HepG2 (cell line): ENCODE measurements at regions of chr6 and their contacts with region 1.

Region 1: DNA sequence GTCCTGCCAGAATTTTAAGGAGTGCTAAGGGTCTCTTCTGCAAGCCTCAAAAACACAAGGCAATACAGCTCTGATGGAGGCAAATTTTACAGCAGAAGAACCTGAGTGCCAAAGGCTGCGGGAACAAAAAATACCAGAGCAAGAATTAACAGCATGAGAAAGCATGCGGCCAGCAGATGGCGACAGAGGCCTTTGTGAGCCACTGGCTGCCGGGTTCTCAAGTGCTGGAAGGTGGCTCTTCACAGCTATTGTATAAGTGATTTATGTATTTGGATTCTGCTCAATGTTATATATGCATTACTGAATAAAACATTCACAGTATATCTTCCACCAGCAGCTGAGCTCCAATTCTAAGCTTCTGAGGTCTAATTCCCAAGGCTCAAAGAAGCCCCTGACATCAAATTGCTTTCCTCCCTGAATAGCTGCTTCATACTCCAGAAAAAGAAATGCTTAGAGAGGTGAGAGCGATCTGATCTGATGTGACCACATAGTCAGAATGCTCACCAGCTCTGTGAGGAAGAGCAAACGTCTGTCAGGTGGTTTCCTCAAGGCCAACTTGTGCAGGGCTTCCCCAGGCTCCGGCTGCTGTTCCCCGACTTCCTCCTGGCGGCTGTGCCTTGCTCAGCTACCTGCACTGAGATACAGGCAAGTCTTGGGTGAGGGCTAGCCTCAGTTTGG is 58.6 kb downstream of the PPP1R3G start:
- DNase-seq: peak; percentile 75
- ATAC-seq: peak; percentile 80
- H3K4me3 ChIP-seq: no peak overlapping the region
- H3K27ac ChIP-seq: no peak overlapping the region
- H3K4me1 ChIP-seq: peaks cover 26% of the 10 kb centered on the region
- H3K27me3 ChIP-seq: no peaks in the 10 kb centered on the region
- CTCF ChIP-seq: peak; percentile 93
- EP300 ChIP-seq: no peak
- POLR2A ChIP-seq: no peak
- RAD21 ChIP-seq: peak; percentile 92

Region 2: DNA sequence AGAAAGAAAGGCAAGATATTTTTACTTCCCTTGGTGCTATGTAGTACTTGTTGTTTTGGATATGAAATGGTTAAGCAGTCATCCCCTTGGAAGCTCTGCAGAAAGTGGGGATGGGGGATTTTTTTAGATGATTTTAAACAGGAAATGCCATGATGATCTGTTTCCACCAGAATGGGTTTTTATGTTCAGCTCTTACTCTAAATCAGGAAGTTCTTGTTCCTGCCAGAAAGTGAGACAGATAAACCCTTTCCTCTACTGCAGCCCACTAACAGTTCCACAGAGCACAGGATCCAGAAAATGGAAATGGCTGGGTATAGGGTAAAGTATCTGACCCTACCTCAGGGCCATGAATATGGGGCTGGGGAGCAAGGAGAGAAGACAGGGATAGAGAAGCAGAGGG is 90.7 kb before region 1 on chr6:
- CTCF ChIA-PET with region 1: interaction called, 3 read pairs
- POLR2A ChIA-PET with region 1: no interaction called
- in situ Hi-C with region 1: no loop called
- intact Hi-C with region 1: loop called (anchors 1 kb)
- DNase-seq: no peak
- ATAC-seq: no peak
- H3K4me3 ChIP-seq: no peak overlapping the region
- H3K27ac ChIP-seq: no peak overlapping the region
- H3K4me1 ChIP-seq: peaks cover 10% of the 10 kb centered on the region
- H3K27me3 ChIP-seq: no peaks in the 10 kb centered on the region
- CTCF ChIP-seq: no peak
- EP300 ChIP-seq: no peak
- POLR2A ChIP-seq: no peak
- RAD21 ChIP-seq: no peak

Region 3: GRCh38 chr6:5205877-5206850 is 62.4 kb after region 1 on chr6:
- CTCF ChIA-PET with region 1: no interaction called
- POLR2A ChIA-PET with region 1: no interaction called
- in situ Hi-C with region 1: no loop called
- intact Hi-C with region 1: loop called (anchors 5 kb)
- DNase-seq: peak; percentile 95
- ATAC-seq: peak; percentile 96
- H3K4me3 ChIP-seq: peak overlapping the region in 1 of 3 experiments; percentile 21; a peak in 1 of 6 replicates
- H3K27ac ChIP-seq: peak overlapping the region; percentile 53
- H3K4me1 ChIP-seq: peaks cover 50% of the 10 kb centered on the region
- H3K27me3 ChIP-seq: no peaks in the 10 kb centered on the region
- CTCF ChIP-seq: no peak; the same call in 1 of the 2 replicates
- EP300 ChIP-seq: peak in 1 of 2 experiments; percentile 76; a peak in 2 of 4 replicates
- POLR2A ChIP-seq: no peak
- RAD21 ChIP-seq: no peak

Region 4: DNA sequence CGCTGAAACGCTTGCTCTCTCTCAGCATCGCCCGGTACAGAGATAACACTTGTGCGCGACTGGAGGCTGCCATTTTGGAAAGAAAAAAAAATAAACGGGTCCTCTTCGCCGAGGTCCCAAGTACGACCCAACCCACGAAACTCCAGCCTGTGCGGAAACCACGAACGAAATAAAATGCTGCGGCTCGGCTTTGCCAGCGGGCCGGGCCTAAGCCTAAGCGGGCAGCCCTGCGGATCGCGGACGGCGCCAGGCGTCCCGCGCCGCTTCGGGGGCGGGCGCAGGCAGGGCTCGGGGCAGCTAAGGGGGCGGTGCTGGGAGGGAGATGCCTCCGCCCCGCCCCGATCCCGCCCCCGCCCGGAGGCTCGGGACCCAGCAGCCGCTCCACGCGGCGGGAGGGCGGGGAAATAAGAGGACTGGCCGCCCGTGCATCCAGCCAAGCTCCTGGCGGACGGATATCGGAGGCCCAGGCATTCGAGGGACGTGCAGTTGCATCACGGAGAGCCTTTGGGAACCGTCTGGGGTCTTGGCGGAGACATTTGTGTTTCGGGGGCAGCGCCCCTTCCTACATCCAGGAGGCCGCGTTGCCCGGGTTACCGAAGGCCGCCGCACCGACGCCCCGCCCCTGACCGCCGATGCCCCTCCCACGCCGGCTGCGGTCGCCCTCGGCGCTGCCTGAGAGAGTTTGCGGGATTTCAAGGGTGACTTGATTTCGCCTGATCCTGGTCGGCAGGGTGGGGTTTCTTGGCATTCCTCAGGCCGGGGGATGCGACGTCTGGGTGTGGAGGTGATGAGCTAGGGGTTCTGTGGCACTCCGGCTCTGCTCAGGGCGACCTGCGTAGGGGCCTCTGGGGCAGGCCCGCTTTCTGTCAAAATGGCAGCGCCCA is 117.1 kb after region 1 on chr6 and contains the starts of genes FARS2 and LYRM4:
- CTCF ChIA-PET with region 1: no interaction called
- POLR2A ChIA-PET with region 1: interaction called, 3 read pairs
- in situ Hi-C with region 1: no loop called
- intact Hi-C with region 1: loop called (anchors 5 kb)
- DNase-seq: peak; percentile 79
- ATAC-seq: peak; percentile 88
- H3K4me3 ChIP-seq: peak within 1 kb of the TSS; percentile 85 to 99 (median 86)
- H3K27ac ChIP-seq: peak within 1 kb of the TSS; percentile 98
- H3K4me1 ChIP-seq: peaks cover 47% of the 10 kb centered on the region
- H3K27me3 ChIP-seq: peaks cover 0 to 2% of the 10 kb centered on the region in 2 experiments; a peak in 1 of 5 replicates
- CTCF ChIP-seq: peak; percentile 39
- EP300 ChIP-seq: no peak
- POLR2A ChIP-seq: peak; percentile 63 to 76
- RAD21 ChIP-seq: peak; percentile 31; the same call in 1 of the 2 replicates
- total RNA-seq, gene FARS2: 26.0 and 28.0 TPM in 2 replicates
- total RNA-seq, gene LYRM4: 64.6 and 80.2 TPM in 2 replicates

Region 5: GRCh38 chr6:5302995-5303622 is 159.3 kb after region 1 on chr6:
- CTCF ChIA-PET with region 1: interaction called, 10 read pairs
- POLR2A ChIA-PET with region 1: no interaction called
- in situ Hi-C with region 1: loop called (anchors 5 kb)
- intact Hi-C with region 1: loop called (anchors 1 kb)
- DNase-seq: peak; percentile 73
- ATAC-seq: peak; percentile 100
- H3K4me3 ChIP-seq: no peak overlapping the region
- H3K27ac ChIP-seq: no peak overlapping the region
- H3K4me1 ChIP-seq: peaks cover 16% of the 10 kb centered on the region
- H3K27me3 ChIP-seq: no peaks in the 10 kb centered on the region
- CTCF ChIP-seq: peak; percentile 88
- EP300 ChIP-seq: no peak
- POLR2A ChIP-seq: no peak
- RAD21 ChIP-seq: peak; percentile 83

Region 6: DNA sequence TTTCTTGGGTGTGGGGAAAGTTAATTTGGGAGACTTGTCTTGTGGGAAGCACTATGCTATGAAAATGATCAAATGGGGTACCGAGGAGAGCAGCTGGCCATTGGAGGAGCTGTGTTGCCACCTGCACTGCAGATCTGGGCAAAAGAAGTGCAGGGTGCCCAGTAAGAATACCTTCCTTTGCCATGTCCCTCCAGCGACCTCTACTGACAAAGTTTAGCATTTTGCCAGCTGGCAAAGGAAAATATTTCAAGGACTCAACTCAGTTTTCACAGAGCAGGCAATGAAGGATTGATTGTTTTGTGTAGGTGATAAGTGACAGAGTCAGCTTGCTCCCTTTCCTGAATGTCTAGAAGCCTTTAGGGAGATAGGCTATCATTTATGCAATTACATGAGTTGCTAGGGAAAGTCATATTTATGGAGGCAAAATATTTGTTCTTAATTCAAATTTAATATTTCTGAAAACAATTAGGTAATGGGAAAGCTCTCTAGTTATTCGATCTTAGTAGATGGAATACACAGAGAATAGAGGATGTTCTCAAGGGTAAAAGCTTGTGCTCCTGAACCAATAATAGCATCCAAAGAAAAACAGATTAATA is 236.0 kb after region 1 on chr6:
- CTCF ChIA-PET with region 1: interaction called, 16 read pairs
- POLR2A ChIA-PET with region 1: no interaction called
- in situ Hi-C with region 1: loop called (anchors 5 kb)
- intact Hi-C with region 1: loop called (anchors 5 kb)
- DNase-seq: peak; percentile 71
- ATAC-seq: peak; percentile 80
- H3K4me3 ChIP-seq: no peak overlapping the region
- H3K27ac ChIP-seq: no peak overlapping the region
- H3K4me1 ChIP-seq: no peaks in the 10 kb centered on the region
- H3K27me3 ChIP-seq: no peaks in the 10 kb centered on the region
- CTCF ChIP-seq: peak; percentile 90
- EP300 ChIP-seq: no peak
- POLR2A ChIP-seq: no peak
- RAD21 ChIP-seq: peak; percentile 73

Region 7: DNA sequence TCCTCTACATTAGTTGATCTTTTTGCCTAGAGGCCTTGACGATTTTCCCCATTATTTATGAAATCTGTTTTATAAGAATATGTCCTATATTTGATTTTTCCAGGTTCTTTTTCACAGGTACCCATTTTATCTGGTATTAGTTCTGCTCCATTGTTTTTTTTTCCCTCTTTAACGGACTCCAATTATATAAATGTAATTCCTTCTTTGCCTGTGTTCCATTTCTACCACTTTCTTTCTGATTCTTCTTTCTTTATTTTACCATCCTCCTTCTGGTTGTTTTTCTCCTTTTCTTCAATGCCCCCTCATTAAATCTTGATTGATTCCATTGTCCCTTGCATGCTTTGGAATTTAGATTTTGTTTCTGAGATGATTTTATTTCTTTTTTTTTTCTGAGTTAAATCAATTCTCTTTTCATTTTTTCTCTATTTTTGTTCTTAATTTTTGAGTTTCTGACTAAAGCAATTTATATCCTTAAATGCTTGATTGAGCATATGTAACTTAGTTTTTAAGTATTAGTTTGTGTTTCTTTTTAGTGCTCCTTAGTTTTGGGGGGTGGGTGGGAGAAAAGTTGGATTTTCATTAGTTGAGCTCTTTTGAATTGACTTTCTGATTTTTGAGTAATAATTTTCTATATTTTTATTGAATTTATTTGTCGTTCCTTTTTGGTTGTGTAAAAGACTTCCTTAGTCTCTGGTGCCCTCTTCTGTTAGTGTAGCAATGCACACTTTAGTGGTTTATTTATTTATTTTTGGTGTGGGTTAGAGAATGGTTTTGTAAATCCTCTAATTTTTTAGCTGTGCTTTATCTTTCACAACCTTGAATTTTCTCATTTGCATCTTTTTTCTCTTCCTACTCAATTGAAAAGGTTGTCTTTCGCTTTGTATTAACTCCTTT is 258.3 kb after region 1 on chr6:
- CTCF ChIA-PET with region 1: interaction called, 12 read pairs
- POLR2A ChIA-PET with region 1: no interaction called
- in situ Hi-C with region 1: no loop called
- intact Hi-C with region 1: loop called (anchors 2 kb)
- DNase-seq: peak; percentile 19
- ATAC-seq: no peak
- H3K4me3 ChIP-seq: no peak overlapping the region
- H3K27ac ChIP-seq: no peak overlapping the region
- H3K4me1 ChIP-seq: no peaks in the 10 kb centered on the region
- H3K27me3 ChIP-seq: no peaks in the 10 kb centered on the region
- CTCF ChIP-seq: peak; percentile 41; the same call in 1 of the 2 replicates
- EP300 ChIP-seq: no peak
- POLR2A ChIP-seq: no peak
- RAD21 ChIP-seq: no peak